ENCODE measurements at regions of chr11 and their contacts with region 1.

Region 1: GRCh38 chr11:44071157-44071556 is 5.1 kb downstream of the ACCS start:
- DNase-seq: no peak
- H3K4me3 ChIP-seq: no peak overlapping the region
- H3K27ac ChIP-seq: no peak overlapping the region
- H3K4me1 ChIP-seq: 0 out of 2 replicates have a peak, but pooled peaks cover 6% of the 10 kb centered on the region
- H3K27me3 ChIP-seq: no peaks in the 10 kb centered on the region

Region 2: GRCh38 chr11:44016131-44016530 is 55.0 kb before region 1 on chr11:
- in situ Hi-C with region 1: loop called (anchors 10 kb)
- DNase-seq: peak; percentile 97
- H3K4me3 ChIP-seq: peak overlapping the region; percentile 42; the same call in 1 of the 2 replicates
- H3K27ac ChIP-seq: peak overlapping the region; percentile 79
- H3K4me1 ChIP-seq: peaks cover 49% of the 10 kb centered on the region
- H3K27me3 ChIP-seq: no peaks in the 10 kb centered on the region

Region 3: DNA sequence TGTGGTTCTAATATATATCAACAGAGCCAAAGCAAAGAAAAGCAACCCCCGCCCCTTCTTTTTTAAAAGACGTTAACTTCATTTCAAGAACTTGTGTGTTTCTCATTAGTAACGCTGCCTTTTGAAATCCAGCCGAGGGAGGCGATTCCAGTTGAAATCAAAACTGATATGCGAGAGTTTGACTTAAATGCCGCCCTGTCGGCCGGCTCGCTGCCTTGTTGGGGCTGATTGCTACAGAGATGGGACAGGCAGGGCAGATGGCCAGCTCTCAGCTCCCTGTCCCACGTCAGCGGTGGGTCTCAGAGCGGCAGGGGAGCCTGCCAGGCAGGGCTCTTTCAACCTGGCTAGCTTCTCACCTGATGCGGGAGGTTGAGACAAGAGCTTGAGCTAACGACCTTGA is 290.7 kb after region 1 on chr11:
- in situ Hi-C with region 1: no loop called
- DNase-seq: no peak
- H3K4me3 ChIP-seq: no peak overlapping the region
- H3K27ac ChIP-seq: no peak overlapping the region
- H3K4me1 ChIP-seq: no peaks in the 10 kb centered on the region
- H3K27me3 ChIP-seq: peaks cover 34% of the 10 kb centered on the region